Caco-2 (cell line): ENCODE measurements at regions of chr3 and their contacts with region 1.

Region 1: DNA sequence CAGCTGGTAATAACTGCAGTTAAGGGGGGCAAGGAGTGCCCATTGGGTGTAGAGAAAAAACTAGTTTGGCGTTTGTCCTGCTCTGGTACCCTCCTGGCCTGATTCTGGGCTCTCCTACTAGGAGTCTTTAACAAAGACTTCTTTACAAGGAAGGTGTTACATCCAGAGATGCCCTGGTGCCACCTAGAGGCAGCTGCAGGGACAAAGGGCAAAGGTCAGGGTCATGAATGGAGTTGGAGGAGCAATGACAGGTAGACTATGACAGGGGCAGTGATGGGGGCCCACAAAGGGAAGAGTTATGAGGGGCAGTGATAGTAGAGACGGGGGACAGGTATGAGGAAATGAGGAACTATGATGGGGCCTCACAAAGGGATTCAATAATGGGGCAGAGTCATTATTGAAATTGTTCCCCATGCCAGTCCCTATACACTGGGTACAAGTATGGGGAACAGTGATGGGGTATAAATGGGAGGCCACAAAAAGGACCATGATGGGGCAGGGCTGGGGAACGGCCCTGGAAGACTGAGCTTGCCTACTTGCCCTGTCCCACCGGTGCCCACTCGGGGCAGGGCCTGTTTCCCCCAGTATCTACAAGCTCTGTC is 7.9 kb downstream of the CCDC71 start:
- DNase-seq: peak; percentile 78 to 79
- H3K4me3 ChIP-seq: no peak overlapping the region
- H3K4me3 Mint-ChIP-seq: no peak overlapping the region
- H3K27ac Mint-ChIP-seq: peak overlapping the region; percentile 4
- H3K4me1 ChIP-seq: no peaks in the 10 kb centered on the region
- H3K4me1 Mint-ChIP-seq: no peaks in the 10 kb centered on the region
- H3K27me3 ChIP-seq: no peaks in the 10 kb centered on the region
- H3K27me3 Mint-ChIP-seq: no peaks in the 10 kb centered on the region
- CTCF ChIP-seq: peak; percentile 58 to 86

Region 2: DNA sequence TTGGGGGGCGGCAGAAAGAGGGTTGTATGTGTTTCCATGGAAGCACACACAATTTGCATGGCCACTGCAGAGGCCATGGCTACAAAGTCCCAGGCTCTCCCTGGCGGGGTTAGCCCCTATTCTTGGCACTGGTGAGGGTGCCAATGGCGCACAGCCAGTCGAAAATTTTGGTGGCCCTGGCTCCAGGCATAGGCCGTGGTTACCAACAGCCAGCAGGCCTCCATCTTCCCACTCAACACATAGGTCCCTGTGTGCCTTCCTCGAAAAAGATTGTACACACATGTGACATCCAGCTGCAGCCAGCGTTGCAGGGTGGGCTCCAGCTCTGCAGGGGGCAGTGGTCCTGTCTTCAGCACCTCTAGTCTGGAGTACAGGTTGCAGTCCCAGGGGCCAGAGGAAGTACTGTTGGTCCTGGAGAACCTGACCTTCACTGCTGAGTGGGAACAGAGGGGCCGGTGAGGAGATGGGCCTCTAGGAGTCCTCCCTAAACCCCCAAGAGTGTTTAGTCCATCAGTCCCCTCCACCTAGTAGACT is 161.0 kb before region 1 on chr3:
- CTCF ChIA-PET with region 1: no interaction called
- POLR2A ChIA-PET with region 1: no interaction called
- intact Hi-C with region 1: no loop called
- DNase-seq: no peak
- H3K4me3 ChIP-seq: no peak overlapping the region
- H3K4me3 Mint-ChIP-seq: no peak overlapping the region
- H3K27ac Mint-ChIP-seq: no peak overlapping the region
- H3K4me1 ChIP-seq: no peaks in the 10 kb centered on the region
- H3K4me1 Mint-ChIP-seq: no peaks in the 10 kb centered on the region
- H3K27me3 ChIP-seq: no peaks in the 10 kb centered on the region
- H3K27me3 Mint-ChIP-seq: no peaks in the 10 kb centered on the region
- CTCF ChIP-seq: no peak

Region 3: DNA sequence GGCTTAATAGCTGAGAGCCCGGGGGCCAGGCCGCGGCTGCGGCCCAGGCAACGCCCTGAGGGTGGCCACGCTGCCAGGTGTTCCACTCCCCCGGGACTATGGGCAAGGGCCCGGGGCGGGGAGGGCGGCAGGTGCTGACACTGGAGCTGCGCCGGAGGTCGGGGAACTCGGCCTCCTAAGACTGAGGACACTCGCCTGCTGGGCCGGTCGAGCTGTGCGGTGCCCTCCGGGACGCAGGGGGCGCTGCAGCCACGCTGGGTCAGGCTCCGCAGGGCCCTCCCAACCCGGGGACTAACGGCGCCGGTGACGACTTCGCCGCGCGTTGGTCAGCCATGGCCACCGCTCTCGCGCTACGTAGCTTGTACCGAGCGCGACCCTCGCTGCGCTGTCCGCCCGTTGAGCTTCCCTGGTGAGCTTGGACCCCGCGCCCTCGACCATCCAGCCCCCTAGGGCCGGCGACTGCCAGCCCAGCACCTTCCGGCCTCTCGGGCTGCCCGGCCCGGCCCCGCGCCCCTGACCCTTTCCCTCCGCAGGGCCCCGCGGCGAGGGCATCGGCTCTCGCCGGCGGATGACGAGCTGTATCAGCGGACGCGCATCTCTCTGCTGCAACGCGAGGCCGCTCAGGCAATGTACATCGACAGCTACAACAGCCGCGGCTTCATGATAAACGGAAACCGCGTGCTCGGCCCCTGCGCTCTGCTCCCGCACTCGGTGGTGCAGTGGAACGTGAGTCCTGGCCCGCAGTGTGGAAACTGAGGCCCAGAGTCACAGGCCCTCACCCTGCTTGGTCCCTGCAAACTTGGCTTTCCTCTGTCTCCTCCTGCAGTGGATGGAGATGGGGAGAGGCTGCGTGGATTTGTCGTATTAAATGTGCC is 136.2 kb before region 1 on chr3 and contains the start of gene NDUFAF3:
- CTCF ChIA-PET with region 1: no interaction called
- POLR2A ChIA-PET with region 1: no interaction called
- intact Hi-C with region 1: loop called (anchors 10 kb)
- DNase-seq: peak; percentile 95 to 98
- H3K4me3 ChIP-seq: peak within 1 kb of the TSS; percentile 85
- H3K4me3 Mint-ChIP-seq: peak within 1 kb of the TSS; percentile 88
- H3K27ac Mint-ChIP-seq: peak within 1 kb of the TSS; percentile 97
- H3K4me1 ChIP-seq: peaks cover 3% of the 10 kb centered on the region; the same call in 1 of the 2 replicates
- H3K4me1 Mint-ChIP-seq: peaks cover 6% of the 10 kb centered on the region
- H3K27me3 ChIP-seq: no peaks in the 10 kb centered on the region
- H3K27me3 Mint-ChIP-seq: no peaks in the 10 kb centered on the region
- CTCF ChIP-seq: peak; percentile 82 to 92
- total RNA-seq, gene NDUFAF3: 65.9 and 68.7 TPM in 2 replicates

Region 4: GRCh38 chr3:49140080-49140479 is 18.1 kb before region 1 on chr3:
- CTCF ChIA-PET with region 1: no interaction called
- POLR2A ChIA-PET with region 1: no interaction called
- intact Hi-C with region 1: no loop called
- DNase-seq: no peak
- H3K4me3 ChIP-seq: no peak overlapping the region
- H3K4me3 Mint-ChIP-seq: no peak overlapping the region
- H3K27ac Mint-ChIP-seq: no peak overlapping the region
- H3K4me1 ChIP-seq: 0 out of 2 replicates have a peak, but pooled peaks cover 5% of the 10 kb centered on the region
- H3K4me1 Mint-ChIP-seq: peaks cover 13% of the 10 kb centered on the region
- H3K27me3 ChIP-seq: no peaks in the 10 kb centered on the region
- H3K27me3 Mint-ChIP-seq: no peaks in the 10 kb centered on the region
- CTCF ChIP-seq: no peak

Region 5: DNA sequence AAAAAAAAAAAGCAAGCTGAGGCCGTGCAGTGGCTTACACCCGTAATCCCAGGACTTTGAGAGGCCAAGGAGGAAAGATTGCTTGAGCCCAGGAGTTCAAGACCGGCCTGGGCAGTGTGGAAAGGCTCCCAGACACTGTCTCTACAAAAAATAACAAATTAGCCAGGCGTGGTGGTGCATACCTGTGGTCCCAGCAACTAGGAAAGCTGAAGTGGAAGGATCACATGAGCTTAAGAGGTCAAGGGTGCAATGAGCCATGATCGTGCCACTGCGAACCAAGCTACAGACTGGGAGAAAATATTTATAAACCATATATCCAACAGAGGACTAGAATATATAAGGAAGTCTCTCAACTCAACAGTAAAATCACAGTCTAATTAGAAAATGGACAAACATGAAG is 23.1 kb after region 1 on chr3:
- CTCF ChIA-PET with region 1: no interaction called
- POLR2A ChIA-PET with region 1: no interaction called
- intact Hi-C with region 1: no loop called
- DNase-seq: no peak
- H3K4me3 ChIP-seq: no peak overlapping the region
- H3K4me3 Mint-ChIP-seq: no peak overlapping the region
- H3K27ac Mint-ChIP-seq: no peak overlapping the region
- H3K4me1 ChIP-seq: no peaks in the 10 kb centered on the region
- H3K4me1 Mint-ChIP-seq: no peaks in the 10 kb centered on the region
- H3K27me3 ChIP-seq: no peaks in the 10 kb centered on the region
- H3K27me3 Mint-ChIP-seq: no peaks in the 10 kb centered on the region
- CTCF ChIP-seq: no peak